Calu3 (cell line): ENCODE measurements at regions of chr12 and their contacts with region 1.

Region 1: GRCh38 chr12:95522692-95523091 is 28.6 kb downstream of the USP44 start:
- DNase-seq: no peak
- H3K4me3 Mint-ChIP-seq: no peak overlapping the region
- H3K27ac Mint-ChIP-seq: no peak overlapping the region
- H3K4me1 Mint-ChIP-seq: no peaks in the 10 kb centered on the region
- H3K27me3 Mint-ChIP-seq: no peaks in the 10 kb centered on the region
- CTCF ChIP-seq: no peak

Region 2: GRCh38 chr12:93526786-93527428 is 1995.8 kb before region 1 on chr12:
- CTCF ChIA-PET with region 1: interaction called, 10 read pairs
- intact Hi-C with region 1: no loop called
- DNase-seq: peak; percentile 76
- H3K4me3 Mint-ChIP-seq: no peak overlapping the region
- H3K27ac Mint-ChIP-seq: no peak overlapping the region
- H3K4me1 Mint-ChIP-seq: peaks cover 28% of the 10 kb centered on the region
- H3K27me3 Mint-ChIP-seq: no peaks in the 10 kb centered on the region
- CTCF ChIP-seq: no peak

Region 3: DNA sequence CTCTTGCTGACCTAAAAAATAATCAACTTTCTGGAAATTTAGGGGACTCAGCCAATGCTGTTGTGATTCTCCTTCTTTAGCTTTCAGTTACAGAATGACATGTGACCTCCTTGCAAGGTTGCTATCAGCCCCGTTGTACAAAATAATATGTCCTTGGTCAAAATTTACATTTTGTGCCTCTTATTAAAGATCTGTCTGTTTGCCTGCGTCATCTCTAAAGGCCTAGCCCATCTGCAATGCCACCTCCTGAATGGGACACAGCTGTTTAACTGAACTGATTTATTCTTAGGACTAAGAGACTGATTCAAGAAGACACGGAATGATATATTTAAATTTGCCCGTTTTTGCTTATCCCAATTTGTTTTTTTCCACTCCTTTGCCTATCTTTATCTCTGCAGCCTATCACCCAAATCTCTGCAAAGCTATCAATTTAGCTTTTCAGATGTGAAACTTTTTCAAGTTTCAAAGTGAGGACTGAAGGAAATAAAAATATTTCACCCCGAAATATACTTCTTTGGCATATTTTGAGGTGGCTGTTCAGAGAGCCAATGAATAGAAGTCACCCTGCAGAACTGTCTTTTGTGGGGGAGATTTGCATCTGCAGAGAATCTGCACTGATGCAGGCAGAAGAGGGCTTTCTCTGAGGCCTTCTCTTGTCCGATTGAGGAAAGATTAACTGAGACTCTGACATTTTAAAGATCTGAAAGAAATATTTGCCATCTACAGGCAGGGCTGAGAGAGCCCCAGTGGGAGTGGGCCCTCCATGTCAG is 179.0 kb before region 1 on chr12:
- CTCF ChIA-PET with region 1: interaction called, 10 read pairs
- intact Hi-C with region 1: no loop called
- DNase-seq: no peak
- H3K4me3 Mint-ChIP-seq: no peak overlapping the region
- H3K27ac Mint-ChIP-seq: no peak overlapping the region
- H3K4me1 Mint-ChIP-seq: peaks cover 15% of the 10 kb centered on the region
- H3K27me3 Mint-ChIP-seq: no peaks in the 10 kb centered on the region
- CTCF ChIP-seq: no peak

Region 4: DNA sequence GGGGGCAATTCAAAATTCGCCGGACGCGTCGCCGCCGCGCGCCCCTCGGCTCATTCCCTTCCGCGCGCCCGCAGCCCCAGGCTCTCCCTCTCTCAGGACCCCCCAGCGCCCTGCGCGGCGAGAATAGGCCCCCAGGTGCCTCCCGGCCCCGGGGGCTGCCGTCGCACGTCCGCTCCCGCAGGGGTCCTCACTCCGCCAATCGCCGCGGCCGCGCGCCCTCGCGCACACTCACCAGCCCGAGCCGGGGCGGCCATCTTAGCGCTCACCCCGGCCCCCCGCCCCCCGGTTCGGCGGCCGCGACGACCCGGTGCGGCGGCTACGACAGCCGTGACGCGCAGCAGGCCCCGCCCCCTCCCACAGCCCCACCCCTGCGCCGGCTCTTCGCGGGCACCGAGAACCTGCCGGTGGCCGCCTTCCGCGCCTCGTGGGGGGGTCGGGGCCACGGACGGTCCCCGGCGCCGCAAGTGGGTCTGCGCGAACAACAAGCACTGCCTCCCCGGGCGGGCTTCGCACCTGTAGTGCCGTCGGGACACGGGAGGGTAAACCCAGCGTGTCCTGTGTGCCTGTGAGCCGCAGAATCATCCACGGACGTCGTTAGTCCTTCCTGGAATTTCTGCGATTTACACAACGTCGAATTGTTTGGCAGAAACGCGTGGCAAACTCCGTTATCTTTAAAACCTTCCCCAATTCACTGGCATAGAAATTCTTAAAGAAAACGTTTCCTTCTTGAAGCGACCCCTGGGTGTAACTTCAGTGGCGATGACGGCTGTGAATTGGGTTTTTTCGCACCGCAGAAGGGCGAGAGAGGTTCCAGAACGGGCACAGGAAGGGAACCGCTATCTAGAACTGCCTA is 26.1 kb after region 1 on chr12:
- CTCF ChIA-PET with region 1: no interaction called
- intact Hi-C with region 1: no loop called
- DNase-seq: peak; percentile 87
- H3K4me3 Mint-ChIP-seq: peak overlapping the region; percentile 83
- H3K27ac Mint-ChIP-seq: peak overlapping the region; percentile 43
- H3K4me1 Mint-ChIP-seq: peaks cover 33% of the 10 kb centered on the region
- H3K27me3 Mint-ChIP-seq: no peaks in the 10 kb centered on the region
- CTCF ChIP-seq: no peak